Heart right ventricle (tissue), 16 donors: ENCODE measurements at regions of chr12 and their contacts with region 1.

Region 1: GRCh38 chr12:14514154-14514842 is 53.4 kb downstream of the PLBD1 start:
- DNase-seq: peak in 1 of 2 donors; percentile 38
- ATAC-seq: peak in 6 of 8 donors; percentile 34 to 75 (median 52)
- H3K4me3 ChIP-seq: no peak overlapping the region
- H3K27ac ChIP-seq: no peak overlapping the region
- H3K4me1 ChIP-seq: no peaks in the 10 kb centered on the region
- H3K27me3 ChIP-seq: no peaks in the 10 kb centered on the region
- CTCF ChIP-seq: peak in 8 of 9 donors; percentile 26 to 64 (median 51)

Region 2: GRCh38 chr12:14403711-14404196 is 110.5 kb before region 1 on chr12:
- intact Hi-C with region 1: no loop called
- DNase-seq: peak in 1 of 2 donors; percentile 71
- ATAC-seq: peak; percentile 86 to 94 (median 92)
- H3K4me3 ChIP-seq: no peak overlapping the region
- H3K27ac ChIP-seq: peak overlapping the region in 8 of 10 donors; percentile 4 to 66 (median 36)
- H3K4me1 ChIP-seq: peaks cover 6 to 80% (median 30%) of the 10 kb centered on the region in 9 donors
- H3K27me3 ChIP-seq: no peaks in the 10 kb centered on the region
- CTCF ChIP-seq: no peak

Region 3: DNA sequence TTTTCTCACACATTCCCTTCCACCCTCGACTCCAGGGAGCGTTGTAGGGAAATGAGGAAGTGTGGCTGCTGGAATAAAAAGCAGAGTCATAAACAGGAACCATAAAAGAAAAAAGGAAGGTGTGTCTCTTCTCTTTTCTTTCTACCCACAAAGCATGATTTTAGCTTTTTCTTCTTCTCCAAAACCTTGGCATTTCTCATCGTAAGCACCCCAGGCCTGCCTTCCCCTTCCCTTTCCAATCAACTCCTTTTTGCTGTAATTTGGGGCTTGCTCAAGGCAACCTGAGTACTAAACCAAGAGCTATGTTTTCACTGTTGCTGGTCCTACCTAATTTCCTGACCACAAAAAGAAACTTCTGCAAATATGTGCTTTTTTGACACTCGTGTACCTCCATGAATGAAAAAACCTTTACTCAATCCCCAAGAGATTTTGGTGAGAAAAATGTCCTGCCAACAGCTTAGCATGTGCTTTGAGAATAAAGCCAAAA is 44.2 kb after region 1 on chr12:
- intact Hi-C with region 1: no loop called
- DNase-seq: no peak
- ATAC-seq: no peak
- H3K4me3 ChIP-seq: no peak overlapping the region
- H3K27ac ChIP-seq: peak overlapping the region in 1 of 10 donors; percentile 57
- H3K4me1 ChIP-seq: peaks cover 3 to 64% (median 30%) of the 10 kb centered on the region in 9 donors
- H3K27me3 ChIP-seq: no peaks in the 10 kb centered on the region
- CTCF ChIP-seq: no peak

Region 4: GRCh38 chr12:14618983-14619382 is 104.7 kb after region 1 on chr12:
- intact Hi-C with region 1: loop called in 6 of 10 experiments (anchors 2 to 10 kb)
- DNase-seq: peak in 1 of 2 donors; percentile 18
- ATAC-seq: peak in 4 of 8 donors; percentile 52 to 68 (median 58)
- H3K4me3 ChIP-seq: no peak overlapping the region
- H3K27ac ChIP-seq: no peak overlapping the region
- H3K4me1 ChIP-seq: peaks cover 0 to 29% (median 9%) of the 10 kb centered on the region in 9 donors
- H3K27me3 ChIP-seq: no peaks in the 10 kb centered on the region
- CTCF ChIP-seq: peak in 8 of 9 donors; percentile 14 to 65 (median 50)

Region 5: DNA sequence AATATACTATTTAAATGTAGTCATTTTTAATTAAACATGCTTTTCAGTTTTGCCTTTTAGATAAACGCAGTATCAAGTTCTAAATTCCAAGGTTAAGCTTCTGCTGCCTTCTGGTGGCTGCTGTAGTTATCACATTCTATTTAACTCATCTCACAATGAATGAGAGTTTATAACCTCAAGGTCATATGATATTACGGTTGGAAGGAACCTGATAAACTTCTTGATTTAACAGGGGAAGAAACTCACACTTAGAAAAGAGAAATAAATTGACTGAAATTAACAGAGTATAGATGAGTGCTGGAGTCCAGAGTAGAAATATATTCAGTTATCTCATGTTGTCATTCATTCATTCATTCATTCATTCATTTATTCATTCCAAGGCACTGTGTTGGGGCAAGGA is 150.2 kb after region 1 on chr12:
- intact Hi-C with region 1: loop called in 3 of 10 experiments (anchors 5 to 10 kb)
- DNase-seq: peak in 1 of 2 donors; percentile 39
- ATAC-seq: peak in 3 of 8 donors; percentile 16 to 55 (median 41)
- H3K4me3 ChIP-seq: no peak overlapping the region
- H3K27ac ChIP-seq: no peak overlapping the region
- H3K4me1 ChIP-seq: peaks cover 0 to 4% (median 0%) of the 10 kb centered on the region in 9 donors
- H3K27me3 ChIP-seq: no peaks in the 10 kb centered on the region
- CTCF ChIP-seq: peak; percentile 38 to 79 (median 68)

Region 6: GRCh38 chr12:14678547-14679150 is 164.4 kb after region 1 on chr12:
- intact Hi-C with region 1: loop called in 1 of 10 experiments (anchors 10 kb)
- DNase-seq: no peak
- ATAC-seq: no peak
- H3K4me3 ChIP-seq: no peak overlapping the region
- H3K27ac ChIP-seq: no peak overlapping the region
- H3K4me1 ChIP-seq: no peaks in the 10 kb centered on the region
- H3K27me3 ChIP-seq: no peaks in the 10 kb centered on the region
- CTCF ChIP-seq: no peak